Activated CD8-positive, alpha-beta T cell treated with anti-CD3 and anti-CD28 coated beads, Interleukin-2, amount 10 ng/mL, durations not matched to agents 7 days and 5 days (primary cell): ENCODE measurements at regions of chr9 and their contacts with region 1.

Region 1: GRCh38 chr9:32579706-32580331 is 6.9 kb upstream of the NDUFB6 start:
- DNase-seq: peak; percentile 83
- ATAC-seq: peak; percentile 63
- H3K4me3 Mint-ChIP-seq: no peak overlapping the region
- H3K27ac Mint-ChIP-seq: no peak overlapping the region
- H3K4me1 Mint-ChIP-seq: peaks cover 2% of the 10 kb centered on the region
- H3K27me3 Mint-ChIP-seq: peaks cover 7% of the 10 kb centered on the region

Region 2: DNA sequence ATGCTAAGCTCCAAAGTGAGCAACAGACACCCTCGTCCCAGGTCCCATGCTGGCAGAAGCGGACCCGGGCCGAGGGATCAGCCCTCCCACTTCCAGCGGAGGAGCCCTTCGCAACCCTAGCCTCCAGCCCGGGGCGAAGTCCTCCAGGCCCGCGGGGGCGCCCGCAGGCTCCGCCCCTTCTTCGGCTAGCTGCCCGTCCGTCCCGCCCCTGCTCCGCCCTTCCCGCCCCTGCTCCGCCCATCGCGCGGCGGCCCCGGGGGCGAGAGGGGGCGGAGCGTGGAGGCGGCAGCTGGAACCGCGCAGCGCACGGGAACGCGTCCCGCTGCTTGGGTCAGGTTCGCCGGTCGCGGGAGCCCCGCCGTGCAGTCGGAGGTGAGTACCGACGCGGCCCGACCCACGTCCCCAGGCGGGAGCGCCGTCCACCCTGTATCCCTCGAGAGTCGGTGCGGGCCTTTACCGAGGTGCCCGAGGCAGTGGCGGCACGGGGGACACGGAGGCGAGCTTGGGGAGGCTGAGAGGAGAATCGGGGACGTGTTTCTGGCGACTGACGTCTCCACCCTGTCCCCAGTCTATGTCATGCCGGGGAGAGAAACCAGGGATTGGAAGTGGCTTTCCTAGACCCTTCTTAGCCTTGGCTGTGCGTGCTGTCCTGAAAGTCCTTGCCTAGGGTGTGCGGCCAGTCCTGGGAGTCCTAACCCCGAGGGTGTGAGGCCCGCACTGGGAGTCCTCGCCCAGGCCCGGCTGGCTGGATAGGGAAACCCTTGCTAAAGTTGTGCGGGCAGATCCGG is 195.3 kb before region 1 on chr9 and contains the start of gene ACO1:
- CTCF ChIA-PET with region 1: interaction called, 608 read pairs
- POLR2A ChIA-PET with region 1: interaction called, 3 read pairs
- DNase-seq: peak; percentile 87
- ATAC-seq: peak; percentile 98
- H3K4me3 Mint-ChIP-seq: peak within 1 kb of the TSS; percentile 78
- H3K27ac Mint-ChIP-seq: no peak within 1 kb of the TSS
- H3K4me1 Mint-ChIP-seq: peaks cover 11% of the 10 kb centered on the region
- H3K27me3 Mint-ChIP-seq: peaks cover 31% of the 10 kb centered on the region
- total RNA-seq, gene ACO1: 8.6 to 8.8 TPM

Region 3: GRCh38 chr9:32526041-32526706 is 53.6 kb before region 1 on chr9 and contains the start of gene RIGI:
- CTCF ChIA-PET with region 1: interaction called, 26 read pairs
- POLR2A ChIA-PET with region 1: interaction called, 7 read pairs
- DNase-seq: peak; percentile 86
- ATAC-seq: peak; percentile 81
- H3K4me3 Mint-ChIP-seq: peak within 1 kb of the TSS; percentile 98
- H3K27ac Mint-ChIP-seq: peak within 1 kb of the TSS; percentile 96
- H3K4me1 Mint-ChIP-seq: peaks cover 57% of the 10 kb centered on the region
- H3K27me3 Mint-ChIP-seq: no peaks in the 10 kb centered on the region
- total RNA-seq, gene RIGI: 19.2 to 19.6 TPM

Region 4: GRCh38 chr9:32543047-32543446 is 36.8 kb before region 1 on chr9:
- CTCF ChIA-PET with region 1: interaction called, 14 read pairs
- POLR2A ChIA-PET with region 1: no interaction called
- DNase-seq: no peak
- ATAC-seq: no peak
- H3K4me3 Mint-ChIP-seq: no peak overlapping the region
- H3K27ac Mint-ChIP-seq: no peak overlapping the region
- H3K4me1 Mint-ChIP-seq: peaks cover 5% of the 10 kb centered on the region
- H3K27me3 Mint-ChIP-seq: no peaks in the 10 kb centered on the region

Region 5: DNA sequence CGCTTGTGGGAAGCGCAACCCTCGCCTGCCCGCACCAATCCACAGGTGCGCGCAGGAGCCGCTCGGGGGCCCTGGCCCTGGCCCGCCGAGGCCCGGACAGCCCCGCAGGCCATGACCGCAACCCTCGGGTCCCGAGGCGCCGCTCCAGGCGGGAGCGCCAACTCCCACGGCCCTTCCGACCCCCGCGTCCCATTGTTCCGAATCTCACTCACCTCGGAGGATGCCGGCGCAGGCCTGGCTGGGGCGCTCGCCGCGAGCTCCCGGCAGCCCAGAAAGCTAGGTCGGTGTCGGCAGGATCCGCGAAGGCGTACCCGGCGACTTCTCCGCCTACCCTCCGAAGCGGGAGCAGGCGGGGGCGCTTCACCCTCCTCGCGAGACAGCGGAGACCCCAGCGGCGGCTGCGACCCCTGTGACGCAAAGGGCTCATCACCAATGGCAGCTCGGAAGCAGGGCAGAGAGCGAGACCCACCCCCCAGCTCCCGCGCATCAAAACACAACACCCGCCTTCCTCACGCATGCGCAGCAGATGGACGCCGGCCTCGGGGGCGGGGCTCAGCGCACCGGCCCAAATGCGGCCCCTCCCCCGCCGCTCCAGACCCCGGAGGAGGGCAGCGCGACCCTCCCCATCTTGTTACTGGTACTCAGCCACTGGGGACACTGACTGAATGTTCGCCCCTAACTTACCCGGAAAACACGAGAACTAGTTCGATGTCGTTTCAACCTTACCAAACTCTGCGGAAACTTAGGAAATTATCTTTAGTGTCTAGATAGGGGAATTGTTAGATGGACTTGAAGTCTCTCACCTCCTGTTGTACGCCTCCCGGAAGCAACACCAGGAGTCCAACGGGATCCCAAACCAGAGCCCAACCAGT is 29.0 kb before region 1 on chr9:
- CTCF ChIA-PET with region 1: interaction called, 69 read pairs
- POLR2A ChIA-PET with region 1: no interaction called
- DNase-seq: peak; percentile 95
- ATAC-seq: peak; percentile 81
- H3K4me3 Mint-ChIP-seq: peak overlapping the region; percentile 89
- H3K27ac Mint-ChIP-seq: peak overlapping the region; percentile 99
- H3K4me1 Mint-ChIP-seq: peaks cover 30% of the 10 kb centered on the region
- H3K27me3 Mint-ChIP-seq: no peaks in the 10 kb centered on the region

Region 6: DNA sequence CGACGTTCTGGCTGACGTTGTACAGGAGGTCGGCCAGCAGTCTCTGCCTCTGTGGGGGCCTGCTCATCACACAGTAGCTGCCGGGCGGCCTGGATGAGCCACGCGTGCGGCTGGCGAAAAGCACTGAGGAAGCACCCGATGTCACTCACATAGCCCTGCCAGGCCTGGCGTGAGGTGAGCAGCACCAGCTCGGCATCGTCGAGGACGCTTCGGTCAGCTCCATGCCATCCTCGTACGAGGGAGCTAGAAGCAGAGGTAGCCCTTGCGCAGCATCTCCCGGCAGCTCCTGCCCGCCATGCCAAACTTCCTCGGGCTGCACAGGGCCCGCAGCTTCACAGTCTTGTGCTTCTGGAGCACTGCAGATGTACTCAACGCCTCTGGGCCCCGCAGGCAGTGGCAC is 13.0 kb before region 1 on chr9:
- CTCF ChIA-PET with region 1: interaction called, 17 read pairs
- POLR2A ChIA-PET with region 1: no interaction called
- DNase-seq: no peak
- ATAC-seq: no peak
- H3K4me3 Mint-ChIP-seq: no peak overlapping the region
- H3K27ac Mint-ChIP-seq: no peak overlapping the region
- H3K4me1 Mint-ChIP-seq: peaks cover 25% of the 10 kb centered on the region
- H3K27me3 Mint-ChIP-seq: no peaks in the 10 kb centered on the region

Region 7: GRCh38 chr9:32968101-32969011 is 388.5 kb after region 1 on chr9:
- CTCF ChIA-PET with region 1: interaction called, 60 read pairs
- POLR2A ChIA-PET with region 1: no interaction called
- DNase-seq: peak; percentile 69
- ATAC-seq: no peak
- H3K4me3 Mint-ChIP-seq: no peak overlapping the region
- H3K27ac Mint-ChIP-seq: no peak overlapping the region
- H3K4me1 Mint-ChIP-seq: no peaks in the 10 kb centered on the region
- H3K27me3 Mint-ChIP-seq: no peaks in the 10 kb centered on the region